ENCODE measurements at regions of chr19 and their contacts with region 1.

Region 1: GRCh38 chr19:10431943-10432735 is 11.8 kb downstream of the PDE4A start:
- DNase-seq: peak; percentile 73
- ATAC-seq: peak; percentile 46
- H3K4me3 Mint-ChIP-seq: peak overlapping the region; percentile 84
- H3K27ac Mint-ChIP-seq: peak overlapping the region; percentile 95
- H3K4me1 Mint-ChIP-seq: peaks cover 78% of the 10 kb centered on the region
- H3K27me3 Mint-ChIP-seq: peaks cover 2% of the 10 kb centered on the region

Region 2: DNA sequence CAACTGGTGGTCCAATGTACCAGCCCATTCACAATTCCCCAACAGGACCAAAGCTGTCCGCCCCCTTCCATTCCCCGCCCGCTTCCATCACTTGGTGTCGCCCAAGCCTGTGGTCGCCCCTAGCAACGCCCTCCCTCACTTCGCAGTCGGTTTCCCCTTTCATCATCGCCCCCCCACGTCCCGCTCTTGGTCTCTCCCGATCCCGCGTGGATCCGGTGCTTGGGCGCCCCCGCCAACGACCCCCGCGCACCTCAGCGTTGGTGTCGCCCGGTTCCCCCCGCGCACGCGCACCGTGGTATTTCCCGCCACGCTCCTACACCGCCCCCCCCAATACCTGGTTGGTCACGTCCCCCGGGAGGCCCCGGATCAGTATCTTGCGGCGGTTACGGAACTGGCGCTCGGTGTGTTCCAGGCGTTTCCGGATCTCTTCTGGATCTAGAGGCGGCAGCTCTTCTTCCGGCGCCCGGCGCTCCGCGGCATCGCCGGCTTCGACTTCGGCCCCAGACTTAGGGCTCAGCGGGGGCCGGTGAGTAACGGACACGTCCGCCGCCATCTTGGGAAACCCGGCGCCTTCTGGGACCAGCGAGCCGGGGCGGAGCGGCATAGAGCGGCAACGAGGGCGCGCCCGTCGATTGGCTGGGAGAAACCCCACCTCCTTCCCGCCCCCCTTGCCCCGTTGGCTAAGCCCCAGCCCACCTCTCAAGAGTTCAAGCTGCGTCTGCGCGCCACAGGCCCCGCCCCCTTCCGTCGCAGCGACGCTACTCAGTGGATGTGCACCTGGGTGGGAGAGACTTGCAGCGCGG is 99.0 kb before region 1 on chr19 and contains the start of gene RAVER1:
- CTCF ChIA-PET with region 1: no interaction called
- POLR2A ChIA-PET with region 1: no interaction called
- DNase-seq: peak; percentile 99
- ATAC-seq: peak; percentile 97
- H3K4me3 Mint-ChIP-seq: peak within 1 kb of the TSS; percentile 95
- H3K27ac Mint-ChIP-seq: peak within 1 kb of the TSS; percentile 96
- H3K4me1 Mint-ChIP-seq: peaks cover 37% of the 10 kb centered on the region
- H3K27me3 Mint-ChIP-seq: no peaks in the 10 kb centered on the region
- total RNA-seq, gene RAVER1: 79.8 to 91.7 TPM

Region 3: DNA sequence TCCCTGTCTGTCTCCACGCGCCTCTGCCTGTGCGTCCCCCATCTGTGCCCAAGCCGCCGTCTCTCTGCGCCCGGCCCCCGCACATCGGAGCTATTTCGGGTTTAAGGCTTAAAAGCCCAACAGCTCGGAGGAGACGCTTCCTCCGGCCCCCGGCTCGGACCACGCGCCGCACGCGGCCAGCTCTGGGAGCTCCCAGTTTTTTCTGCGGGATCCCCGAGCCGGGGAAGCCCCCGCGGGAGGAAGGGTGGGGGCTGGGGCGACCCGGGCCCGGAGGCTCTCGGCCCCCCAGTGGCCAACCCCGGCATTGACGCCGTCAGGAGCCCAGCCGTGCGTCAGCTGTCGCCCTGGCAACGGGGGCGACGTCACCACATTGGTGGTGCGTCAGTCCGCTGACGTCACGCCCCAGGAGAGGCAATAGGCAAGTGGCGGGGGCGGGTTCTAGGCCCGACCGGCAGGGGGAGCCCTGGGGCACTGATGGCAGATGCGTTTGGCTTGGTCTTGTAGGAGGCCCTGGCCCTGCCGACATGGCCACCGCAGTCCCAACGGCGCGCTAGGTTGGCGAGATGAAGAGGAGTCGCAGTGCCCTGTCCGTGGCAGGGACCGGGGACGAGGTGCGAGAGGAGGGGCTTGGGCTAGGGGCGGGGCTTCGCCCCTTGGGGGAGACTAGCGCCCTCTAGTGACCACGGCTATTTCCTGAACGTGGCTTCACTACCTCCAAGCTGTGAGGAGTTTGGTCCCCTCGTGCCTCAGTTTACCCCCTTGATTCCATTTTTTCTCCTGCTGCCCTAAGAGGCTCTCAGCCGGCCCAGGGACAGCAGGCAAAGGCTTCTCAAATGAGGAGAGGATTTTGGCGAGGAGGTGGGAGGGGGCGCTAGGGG is 15.5 kb before region 1 on chr19:
- CTCF ChIA-PET with region 1: interaction called, 1,132 read pairs
- POLR2A ChIA-PET with region 1: interaction called, 25 read pairs
- DNase-seq: peak; percentile 96
- ATAC-seq: peak; percentile 45
- H3K4me3 Mint-ChIP-seq: peak overlapping the region; percentile 75
- H3K27ac Mint-ChIP-seq: peak overlapping the region; percentile 92
- H3K4me1 Mint-ChIP-seq: peaks cover 66% of the 10 kb centered on the region
- H3K27me3 Mint-ChIP-seq: no peaks in the 10 kb centered on the region